BJ (cell line): ENCODE measurements at regions of chr2 and their contacts with region 1.

Region 1: GRCh38 chr2:84716564-84716963 is 164.3 kb downstream of the TRABD2A start:
- DNase-seq: no peak
- H3K4me3 ChIP-seq: no peak overlapping the region
- H3K27me3 ChIP-seq: no peaks in the 10 kb centered on the region
- CTCF ChIP-seq: no peak

Region 2: DNA sequence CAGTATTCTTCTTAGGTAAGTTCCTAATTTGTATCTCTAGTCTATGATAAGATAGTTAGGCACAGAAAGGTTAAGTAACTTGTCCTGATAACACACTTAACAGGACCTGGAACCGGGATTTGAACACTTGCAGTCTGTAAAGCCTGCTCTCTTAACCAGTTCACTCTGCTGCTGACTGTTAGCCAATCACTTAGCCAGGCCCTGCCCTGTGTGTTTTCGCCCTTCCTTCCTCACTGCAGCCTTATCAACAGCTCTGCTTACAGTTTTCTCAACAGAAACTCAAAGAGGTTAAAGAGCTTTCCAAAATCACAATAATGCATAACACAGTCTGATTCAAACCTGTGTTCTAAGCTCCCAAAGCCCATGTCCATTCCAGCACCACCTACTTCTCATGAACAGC is 12.7 kb after region 1 on chr2:
- CTCF ChIA-PET with region 1: interaction called, 11 read pairs
- POLR2A ChIA-PET with region 1: no interaction called
- DNase-seq: no peak
- H3K4me3 ChIP-seq: no peak overlapping the region
- H3K27me3 ChIP-seq: peaks cover 6% of the 10 kb centered on the region
- CTCF ChIP-seq: no peak